K562 (cell line): ENCODE measurements at regions of chr11 and their contacts with region 1.

Region 1: GRCh38 chr11:6603287-6604080 is at the starts of genes ILK and RRP8:
- DNase-seq: peak; percentile 91 to 95 (median 93)
- ATAC-seq: peak; percentile 88
- H3K4me3 ChIP-seq: peak within 1 kb of the TSS; percentile 95
- H3K27ac ChIP-seq: peak within 1 kb of the TSS; percentile 87
- H3K4me1 ChIP-seq: peaks cover 31 to 32% of the 10 kb centered on the region in 2 experiments
- H3K27me3 ChIP-seq: no peaks in the 10 kb centered on the region
- CTCF ChIP-seq: 0 out of 6 replicates have a peak, but pooled peaks of 1 of the 3 experiments have one; percentile 22
- EP300 ChIP-seq: no peak
- POLR2A ChIP-seq: peak; percentile 84
- RAD21 ChIP-seq: peak; percentile 3 to 23; a peak in 2 of 4 replicates
- polyA plus RNA-seq, gene ILK: 49.3 to 85.1 TPM
- polyA plus RNA-seq, gene RRP8: 5.7 to 11.4 TPM

Region 2: DNA sequence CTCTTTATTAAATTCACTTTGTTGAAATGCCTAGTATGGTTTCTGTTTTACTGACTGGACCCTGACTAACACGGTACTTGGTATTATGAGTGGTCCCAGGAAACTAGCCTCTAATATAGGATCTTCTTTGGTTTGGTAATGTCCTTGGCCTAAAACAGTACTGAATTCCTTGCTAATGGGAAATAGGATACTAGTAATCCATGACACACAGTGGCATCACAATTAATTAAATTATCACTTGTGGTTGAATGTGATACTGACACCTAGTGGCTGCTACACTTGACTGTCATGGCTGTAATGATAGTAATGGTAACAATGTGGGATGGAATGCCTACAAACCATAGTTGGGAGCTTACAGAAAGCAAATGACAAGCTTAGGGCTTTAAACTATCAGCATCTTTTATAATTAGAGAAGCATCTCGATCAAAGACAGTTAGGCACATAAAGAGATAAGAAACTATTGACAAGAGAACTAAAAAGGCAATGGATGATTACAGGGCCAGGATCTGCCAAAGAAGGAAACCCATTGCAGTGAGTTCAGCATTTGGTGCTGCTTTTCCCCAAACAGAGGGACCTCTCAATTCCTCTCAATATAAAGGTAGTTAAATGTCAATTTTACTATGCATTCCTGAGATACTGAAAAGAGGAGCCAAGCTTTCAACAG is 97.8 kb before region 1 on chr11:
- CTCF ChIA-PET with region 1: no interaction called
- POLR2A ChIA-PET with region 1: no interaction called
- in situ Hi-C with region 1: no loop called
- intact Hi-C with region 1: no loop called
- DNase-seq: peak; percentile 32 to 53 (median 34)
- ATAC-seq: peak; percentile 86
- H3K4me3 ChIP-seq: no peak overlapping the region
- H3K27ac ChIP-seq: no peak overlapping the region
- H3K4me1 ChIP-seq: no peaks in the 10 kb centered on the region
- H3K27me3 ChIP-seq: no peaks in the 10 kb centered on the region
- CTCF ChIP-seq: peak; percentile 61 to 78 (median 77); a peak in 5 of 6 replicates
- EP300 ChIP-seq: no peak
- POLR2A ChIP-seq: no peak
- RAD21 ChIP-seq: peak; percentile 46 to 69

Region 3: DNA sequence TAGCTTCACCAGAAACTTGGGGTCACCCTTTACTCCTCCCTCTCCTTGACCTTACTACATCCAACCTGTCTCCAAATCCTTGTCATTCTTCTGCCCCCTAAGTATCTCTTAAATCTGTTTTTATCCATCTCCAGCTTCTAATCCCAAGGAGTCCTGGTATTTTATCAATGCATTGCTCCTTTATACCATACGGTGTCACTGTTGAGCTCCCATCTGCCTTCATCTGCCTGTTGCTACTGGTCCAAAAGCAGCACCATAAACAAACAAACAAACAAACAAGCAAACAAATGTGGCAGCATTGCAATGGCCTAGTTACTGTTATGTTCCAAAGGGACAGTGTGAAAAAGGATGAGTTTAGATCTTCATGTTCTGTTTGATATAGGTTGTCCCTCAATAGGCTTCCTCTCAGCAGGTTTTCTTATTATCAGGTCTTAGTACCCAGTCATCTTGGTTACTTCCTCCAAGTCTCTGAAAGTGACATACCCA is 72.2 kb before region 1 on chr11:
- CTCF ChIA-PET with region 1: interaction called, 11 read pairs
- POLR2A ChIA-PET with region 1: no interaction called
- in situ Hi-C with region 1: loop called (anchors 5 kb)
- intact Hi-C with region 1: loop called (anchors 2 kb)
- DNase-seq: peak; percentile 65 to 69 (median 67)
- ATAC-seq: peak; percentile 90
- H3K4me3 ChIP-seq: no peak overlapping the region
- H3K27ac ChIP-seq: no peak overlapping the region
- H3K4me1 ChIP-seq: no peaks in the 10 kb centered on the region; a peak in 1 of 5 replicates
- H3K27me3 ChIP-seq: no peaks in the 10 kb centered on the region
- CTCF ChIP-seq: peak; percentile 77 to 85 (median 80)
- EP300 ChIP-seq: no peak
- POLR2A ChIP-seq: no peak
- RAD21 ChIP-seq: peak; percentile 94 to 96

Region 4: DNA sequence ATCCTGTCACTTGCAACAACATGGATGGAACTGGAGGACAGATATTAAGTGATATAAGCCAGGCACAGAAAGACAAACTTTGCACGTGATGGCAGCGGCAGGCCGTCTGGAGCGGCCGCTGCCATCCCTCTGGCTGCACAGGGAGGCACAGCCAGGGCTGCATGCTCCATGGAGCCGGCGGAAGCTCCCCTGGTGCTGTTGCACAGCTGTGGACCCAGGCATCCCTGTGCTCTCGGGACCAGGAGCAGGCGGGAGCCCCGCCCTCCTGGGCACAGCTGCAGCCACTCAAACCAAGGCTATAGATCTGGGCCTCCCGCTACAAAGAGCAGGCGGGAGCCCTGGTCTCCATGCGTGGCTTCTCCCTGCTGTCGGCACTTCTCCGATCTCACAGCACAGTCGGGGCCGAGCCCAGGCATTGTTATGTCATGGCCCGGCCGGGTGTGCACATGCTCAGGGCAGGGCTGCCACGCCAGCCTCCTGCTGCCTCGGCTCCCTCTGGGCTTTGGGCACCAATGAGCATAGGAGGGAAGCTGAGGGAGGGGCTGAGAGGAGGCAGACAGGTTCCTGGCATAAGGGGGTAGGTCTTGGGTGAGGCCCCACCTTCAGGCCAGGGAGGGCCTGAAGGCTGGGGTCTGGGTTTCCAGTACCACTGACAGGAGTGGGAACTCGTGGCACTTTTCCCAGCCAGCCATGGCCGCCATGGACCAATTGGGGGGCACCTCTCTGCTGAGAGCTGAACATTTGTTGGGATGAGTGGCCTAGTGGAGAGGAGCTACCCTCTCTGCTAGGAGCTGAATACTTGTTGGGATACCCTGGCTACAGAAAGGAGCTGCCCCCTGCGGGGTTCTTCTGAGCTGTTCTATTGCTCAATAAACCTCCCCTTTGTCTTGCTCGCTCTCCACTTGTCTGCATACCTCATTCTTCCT is 16.8 kb before region 1 on chr11:
- CTCF ChIA-PET with region 1: no interaction called
- POLR2A ChIA-PET with region 1: interaction called, 15 read pairs
- in situ Hi-C with region 1: no loop called
- intact Hi-C with region 1: no loop called
- DNase-seq: no peak
- ATAC-seq: no peak
- H3K4me3 ChIP-seq: no peak overlapping the region
- H3K27ac ChIP-seq: no peak overlapping the region
- H3K4me1 ChIP-seq: peaks cover 0 to 5% of the 10 kb centered on the region in 2 experiments; a peak in 2 of 5 replicates
- H3K27me3 ChIP-seq: no peaks in the 10 kb centered on the region
- CTCF ChIP-seq: no peak
- EP300 ChIP-seq: no peak
- POLR2A ChIP-seq: no peak
- RAD21 ChIP-seq: no peak

Region 5: GRCh38 chr11:6635082-6635932 is 31.8 kb after region 1 on chr11:
- CTCF ChIA-PET with region 1: no interaction called
- POLR2A ChIA-PET with region 1: interaction called, 5 read pairs
- in situ Hi-C with region 1: no loop called
- intact Hi-C with region 1: loop called (anchors 1 kb)
- DNase-seq: peak in 2 of 4 experiments; percentile 47 to 70
- ATAC-seq: peak; percentile 51
- H3K4me3 ChIP-seq: no peak overlapping the region
- H3K27ac ChIP-seq: peak overlapping the region; percentile 57
- H3K4me1 ChIP-seq: peaks cover 30% of the 10 kb centered on the region in 2 experiments
- H3K27me3 ChIP-seq: no peaks in the 10 kb centered on the region
- CTCF ChIP-seq: no peak
- EP300 ChIP-seq: peak; percentile 32; the same call in 1 of the 2 replicates
- POLR2A ChIP-seq: no peak
- RAD21 ChIP-seq: no peak

Region 6: DNA sequence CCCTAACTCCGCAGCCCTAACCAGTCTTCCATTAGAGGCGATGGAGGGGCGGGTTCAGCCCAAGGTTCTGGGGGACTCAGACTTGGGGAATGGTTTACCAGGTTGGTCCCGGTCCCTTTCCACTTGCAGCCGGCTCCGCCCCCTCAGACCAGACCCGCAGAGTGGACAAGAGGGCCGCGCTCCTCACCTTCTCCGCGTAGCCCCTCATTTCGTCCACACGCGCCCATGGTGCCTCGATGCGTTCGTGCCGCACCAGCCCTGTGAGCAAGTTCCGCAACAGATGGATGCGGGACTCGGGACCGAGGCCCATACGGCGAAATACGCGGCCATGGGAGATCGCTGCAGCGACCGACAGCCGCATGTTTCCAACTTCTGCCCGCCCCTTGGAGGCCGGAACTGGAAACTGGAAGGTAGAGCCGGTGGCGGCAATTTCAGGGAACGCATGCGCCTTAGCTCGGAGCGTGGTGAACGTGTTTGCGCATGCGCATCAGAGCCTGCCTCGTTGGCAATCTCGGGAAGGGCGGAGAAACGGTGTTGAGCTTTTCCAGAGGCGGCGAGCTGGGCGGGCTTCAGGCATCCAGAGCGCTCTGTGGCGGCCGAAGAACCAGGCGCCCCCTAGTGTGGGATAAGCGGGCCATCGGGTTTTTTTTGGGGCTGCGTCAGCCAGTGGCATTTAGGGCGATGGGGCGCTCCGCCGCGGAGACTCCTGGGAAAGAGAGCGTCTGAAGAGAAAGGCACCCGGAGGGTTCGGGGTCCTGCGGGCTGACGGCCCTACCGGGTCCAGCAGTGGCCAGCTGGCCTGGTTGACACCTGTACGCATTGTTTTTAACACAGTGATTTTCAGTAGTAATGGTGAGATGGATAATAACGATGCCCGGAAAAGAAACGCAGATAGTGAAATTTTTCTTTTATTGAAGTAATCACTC is 79.7 kb after region 1 on chr11 and contains the start of gene MRPL17:
- CTCF ChIA-PET with region 1: interaction called, 3 read pairs
- POLR2A ChIA-PET with region 1: interaction called, 5 read pairs
- in situ Hi-C with region 1: no loop called
- intact Hi-C with region 1: loop called (anchors 1 kb)
- DNase-seq: peak; percentile 96 to 99 (median 97)
- ATAC-seq: peak; percentile 94
- H3K4me3 ChIP-seq: peak within 1 kb of the TSS; percentile 68
- H3K27ac ChIP-seq: peak within 1 kb of the TSS; percentile 80
- H3K4me1 ChIP-seq: peaks cover 10 to 14% of the 10 kb centered on the region in 2 experiments; a peak in 4 of 5 replicates
- H3K27me3 ChIP-seq: no peaks in the 10 kb centered on the region
- CTCF ChIP-seq: peak; percentile 92 to 96 (median 93)
- EP300 ChIP-seq: peak; percentile 45; the same call in 1 of the 2 replicates
- POLR2A ChIP-seq: peak; percentile 99
- RAD21 ChIP-seq: peak; percentile 85 to 93
- polyA plus RNA-seq, gene MRPL17: 78.9 to 81.6 TPM